ENCODE measurements at regions of chr20 and their contacts with region 1.

Region 1: GRCh38 chr20:13819885-13820645 is 35.2 kb downstream of the NDUFAF5 start:
- DNase-seq: peak; percentile 59
- CTCF ChIP-seq: peak; percentile 41

Region 2: DNA sequence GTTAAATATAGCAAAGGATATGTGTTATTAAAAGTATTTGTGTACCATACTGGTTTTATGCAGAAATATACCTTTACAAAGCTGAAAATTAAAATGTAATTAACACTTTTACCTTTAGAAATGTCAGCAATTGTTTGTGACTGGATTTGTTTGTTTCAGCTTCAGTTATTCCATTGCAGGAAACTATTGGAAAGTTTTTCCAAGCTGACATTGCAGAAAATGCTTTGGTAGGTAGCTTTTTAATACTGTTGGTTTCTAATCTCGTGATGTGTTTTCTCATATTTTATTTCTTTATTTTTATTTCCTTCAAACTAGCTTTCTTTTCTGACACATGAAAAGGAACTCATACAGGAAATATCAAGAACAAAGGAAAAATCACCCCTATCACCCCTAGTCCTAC is 27.1 kb before region 1 on chr20:
- CTCF ChIA-PET with region 1: interaction called, 22 read pairs
- POLR2A ChIA-PET with region 1: no interaction called
- DNase-seq: no peak
- CTCF ChIP-seq: no peak

Region 3: DNA sequence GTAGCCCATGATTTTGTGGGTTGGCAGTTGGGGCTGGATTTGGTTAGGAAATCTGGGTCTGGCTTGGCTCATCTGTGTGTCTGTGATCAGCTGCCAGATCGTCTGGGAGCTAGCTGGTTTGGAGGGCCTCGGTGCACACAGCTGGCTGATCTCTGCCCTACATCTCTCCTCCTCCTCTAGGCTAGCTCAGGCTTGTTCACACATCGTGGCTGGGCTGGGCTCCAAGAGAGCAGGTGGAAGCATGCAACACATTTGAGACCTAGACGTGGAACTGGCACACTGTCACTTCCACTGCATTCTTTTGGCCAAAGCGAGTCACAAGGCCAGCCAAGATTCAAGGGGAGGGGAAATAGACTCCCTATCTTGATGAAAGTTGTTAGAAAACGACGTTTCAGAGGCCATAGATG is 19.3 kb before region 1 on chr20:
- CTCF ChIA-PET with region 1: interaction called, 22 read pairs
- POLR2A ChIA-PET with region 1: no interaction called
- DNase-seq: no peak
- CTCF ChIP-seq: no peak

Region 4: GRCh38 chr20:13809373-13809772 is 10.7 kb before region 1 on chr20:
- CTCF ChIA-PET with region 1: interaction called, 33 read pairs
- POLR2A ChIA-PET with region 1: no interaction called
- DNase-seq: no peak
- CTCF ChIP-seq: no peak

Region 5: DNA sequence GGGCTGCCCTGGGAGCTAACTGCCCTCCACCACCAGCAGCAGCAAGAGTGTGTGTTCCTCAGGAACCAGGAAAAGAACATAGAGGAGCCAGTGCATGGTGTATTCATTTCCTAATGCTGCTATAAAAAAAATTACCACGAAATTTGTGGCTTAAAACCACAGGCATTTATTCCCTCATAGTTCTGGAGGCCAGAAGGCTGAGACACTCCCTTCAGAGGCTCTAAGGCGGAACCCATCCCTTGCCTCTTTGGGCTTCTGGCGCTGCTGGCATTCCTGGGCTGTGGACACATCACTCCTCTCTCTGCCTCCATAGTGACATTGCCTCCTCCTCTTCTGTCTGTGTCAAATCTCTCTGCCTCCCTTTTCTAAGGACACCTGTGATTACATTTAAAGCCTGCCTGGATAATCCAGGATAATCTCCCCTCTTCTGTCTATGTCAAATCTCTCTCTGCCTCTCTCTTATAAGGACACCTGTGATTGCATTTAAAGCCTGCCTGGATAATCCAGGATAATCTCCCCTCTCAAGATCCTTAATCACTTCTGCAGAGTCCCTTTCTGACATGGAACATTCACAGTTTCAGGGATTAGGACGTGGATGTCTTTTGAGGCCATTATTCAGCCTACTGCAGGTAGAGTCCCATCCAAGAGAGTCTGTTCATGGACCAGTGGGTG is 19.5 kb after region 1 on chr20:
- CTCF ChIA-PET with region 1: interaction called, 19 read pairs
- POLR2A ChIA-PET with region 1: no interaction called
- DNase-seq: no peak
- CTCF ChIP-seq: no peak

Region 6: DNA sequence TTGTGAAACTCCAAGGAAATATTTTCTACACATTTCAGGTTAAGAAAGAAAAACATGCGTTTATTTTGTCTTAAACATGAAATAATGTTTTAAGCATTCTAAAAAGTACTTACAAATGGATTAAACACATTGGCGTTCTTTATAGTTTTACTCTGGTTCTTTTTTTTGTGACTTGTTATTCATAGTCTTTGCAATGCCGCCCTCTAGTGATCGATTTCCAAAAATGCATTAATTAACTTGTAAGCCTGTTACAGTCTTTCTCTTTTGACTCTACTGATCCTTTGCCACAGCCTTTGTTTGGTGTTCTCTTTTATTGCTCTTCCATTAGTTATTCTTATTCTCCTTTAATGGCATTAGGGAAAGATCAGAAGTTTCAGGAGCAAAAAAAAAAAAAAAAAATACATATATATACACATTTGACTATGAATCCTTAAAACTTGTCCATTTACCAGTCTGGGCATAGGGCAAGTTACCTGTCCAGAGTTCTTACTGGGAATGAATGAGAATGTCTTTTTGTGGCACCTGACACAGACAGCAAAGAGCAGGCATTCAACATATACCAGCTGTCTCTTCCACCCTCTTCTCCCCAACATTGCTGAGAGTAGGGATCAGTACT is 235.2 kb after region 1 on chr20:
- CTCF ChIA-PET with region 1: interaction called, 28 read pairs
- POLR2A ChIA-PET with region 1: no interaction called
- DNase-seq: peak; percentile 26
- CTCF ChIP-seq: peak; percentile 61

Measured in GM10248 (cell line).